ENCODE measurements at regions of chr3 and their contacts with region 1.

Region 1: GRCh38 chr3:85801955-85802354 is 843.2 kb downstream of the CADM2 start:
- DNase-seq: peak; percentile 80
- ATAC-seq: peak; percentile 95
- H3K4me3 ChIP-seq: no peak overlapping the region
- H3K27ac ChIP-seq: no peak overlapping the region
- H3K4me1 ChIP-seq: no peaks in the 10 kb centered on the region; the same call in 1 of the 2 replicates
- H3K27me3 ChIP-seq: no peaks in the 10 kb centered on the region
- CTCF ChIP-seq: peak; percentile 91

Region 2: GRCh38 chr3:85662462-85662861 is 139.5 kb before region 1 on chr3:
- CTCF ChIA-PET with region 1: interaction called, 3 read pairs
- POLR2A ChIA-PET with region 1: no interaction called
- intact Hi-C with region 1: loop called (anchors 5 kb)
- DNase-seq: no peak
- ATAC-seq: no peak
- H3K4me3 ChIP-seq: no peak overlapping the region
- H3K27ac ChIP-seq: no peak overlapping the region
- H3K4me1 ChIP-seq: no peaks in the 10 kb centered on the region
- H3K27me3 ChIP-seq: no peaks in the 10 kb centered on the region
- CTCF ChIP-seq: no peak

Region 3: GRCh38 chr3:85821130-85821756 is 19.3 kb after region 1 on chr3:
- CTCF ChIA-PET with region 1: no interaction called
- POLR2A ChIA-PET with region 1: no interaction called
- intact Hi-C with region 1: no loop called
- DNase-seq: peak; percentile 69
- ATAC-seq: peak; percentile 99
- H3K4me3 ChIP-seq: no peak overlapping the region
- H3K27ac ChIP-seq: no peak overlapping the region
- H3K4me1 ChIP-seq: no peaks in the 10 kb centered on the region
- H3K27me3 ChIP-seq: peaks cover 24% of the 10 kb centered on the region
- CTCF ChIP-seq: peak; percentile 87